ENCODE measurements at regions of chr5 and their contacts with region 1.

Region 1: GRCh38 chr5:38265546-38266179 is 7.3 kb downstream of the EGFLAM start:
- DNase-seq: no peak
- ATAC-seq: peak; percentile 55 to 61
- H3K4me3 ChIP-seq: no peak overlapping the region
- H3K27ac ChIP-seq: peak overlapping the region in 2 of 4 donors; percentile 11 to 23
- H3K4me1 ChIP-seq: no peaks in the 10 kb centered on the region
- H3K27me3 ChIP-seq: peaks cover 10 to 18% (median 11%) of the 10 kb centered on the region in 3 donors
- CTCF ChIP-seq: peak in 4 of 5 experiments; percentile 36 to 72 (median 62)
- POLR2A ChIP-seq: no peak

Region 2: DNA sequence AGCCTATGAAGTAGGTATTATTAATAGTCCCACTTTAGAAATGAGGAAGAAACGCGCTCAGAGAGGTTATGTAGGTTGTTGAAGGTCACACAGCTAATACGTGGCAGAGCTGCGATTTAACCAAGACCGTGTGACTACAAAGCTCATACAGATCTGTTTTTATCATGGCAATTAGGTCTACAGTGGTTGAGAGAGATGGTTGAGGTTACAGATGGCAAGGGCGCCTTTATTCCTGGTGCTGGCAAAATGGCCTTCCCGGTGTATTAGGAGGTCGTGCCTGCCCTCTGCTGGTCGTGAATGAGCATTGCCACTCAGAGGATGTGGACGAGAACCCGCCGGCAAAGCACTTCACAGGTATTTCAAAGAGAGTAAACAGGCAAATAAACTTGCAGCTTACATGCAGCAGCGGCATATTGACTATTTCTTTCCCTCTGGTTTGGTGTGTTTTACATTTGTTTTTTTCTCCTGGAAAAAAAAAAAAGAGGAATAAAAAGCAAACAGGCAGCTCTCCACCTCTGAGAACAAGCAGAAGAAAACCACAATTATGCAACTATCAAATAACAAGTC is 72.6 kb before region 1 on chr5:
- in situ Hi-C with region 1: no loop called
- intact Hi-C with region 1: no loop called
- DNase-seq: peak; percentile 44 to 63
- ATAC-seq: peak; percentile 78 to 85
- H3K4me3 ChIP-seq: no peak overlapping the region
- H3K27ac ChIP-seq: no peak overlapping the region
- H3K4me1 ChIP-seq: peaks cover 6% of the 10 kb centered on the region in 2 donors
- H3K27me3 ChIP-seq: peaks cover 0 to 11% (median 0%) of the 10 kb centered on the region in 3 donors
- CTCF ChIP-seq: peak; percentile 79 to 88 (median 84)
- POLR2A ChIP-seq: no peak

Region 3: DNA sequence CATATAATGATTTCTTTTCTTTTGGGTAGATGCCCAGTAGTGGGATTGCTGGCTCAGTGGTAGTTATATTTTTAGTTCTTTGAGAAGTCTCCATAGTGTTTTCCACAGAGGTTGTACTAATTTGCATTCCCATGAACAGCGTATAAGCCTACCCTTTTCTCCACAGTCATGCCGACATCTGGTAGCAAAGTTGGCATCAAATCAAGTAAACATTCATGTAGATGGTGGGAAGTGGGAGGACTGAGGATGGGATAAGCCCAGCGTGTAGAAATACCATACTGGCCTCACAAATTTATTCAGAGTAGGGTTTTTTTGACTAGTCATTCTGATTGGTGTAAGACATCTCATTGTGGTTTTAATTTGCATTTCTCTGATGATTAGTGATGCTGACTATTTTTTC is 108.1 kb after region 1 on chr5:
- in situ Hi-C with region 1: no loop called
- intact Hi-C with region 1: loop called (anchors 10 kb)
- DNase-seq: no peak
- ATAC-seq: no peak
- H3K4me3 ChIP-seq: no peak overlapping the region
- H3K27ac ChIP-seq: peak overlapping the region in 3 of 4 donors; percentile 5 to 23 (median 20)
- H3K4me1 ChIP-seq: no peaks in the 10 kb centered on the region
- H3K27me3 ChIP-seq: no peaks in the 10 kb centered on the region
- CTCF ChIP-seq: no peak
- POLR2A ChIP-seq: no peak

Region 4: DNA sequence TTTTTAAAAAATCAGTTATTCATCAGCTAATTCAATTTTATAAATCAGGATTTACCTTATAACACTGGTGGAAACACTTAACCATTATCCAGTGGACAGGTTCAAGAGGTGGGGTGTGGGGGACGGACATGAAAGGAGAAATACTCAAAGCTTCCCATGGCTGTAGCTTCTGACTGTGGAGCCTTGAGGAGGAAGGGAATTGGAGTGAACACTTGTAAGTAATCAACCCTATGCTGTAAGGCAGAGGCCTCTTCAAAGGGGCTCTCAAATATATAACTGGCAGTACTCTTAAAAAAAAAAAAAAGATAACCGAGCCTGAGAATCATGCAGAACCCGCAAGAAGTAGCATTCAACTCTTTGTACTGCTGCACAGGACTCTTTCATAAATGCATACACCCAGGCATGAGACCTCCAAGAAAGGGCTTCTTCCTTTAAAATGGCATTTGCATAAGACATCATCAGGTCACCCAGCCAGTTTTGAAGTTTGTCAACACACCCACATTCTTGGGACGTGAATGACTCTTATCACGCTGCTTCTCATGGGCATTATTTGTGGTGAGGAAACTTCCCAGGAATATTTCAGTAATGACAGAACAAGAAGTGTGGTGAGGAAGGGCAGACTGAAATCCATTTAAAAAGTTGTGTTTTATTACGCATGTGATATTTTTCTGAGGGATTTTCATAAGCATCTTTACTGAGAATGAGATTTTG is 588.2 kb after region 1 on chr5:
- in situ Hi-C with region 1: no loop called
- intact Hi-C with region 1: no loop called
- DNase-seq: no peak
- ATAC-seq: no peak
- H3K4me3 ChIP-seq: no peak overlapping the region
- H3K27ac ChIP-seq: no peak overlapping the region
- H3K4me1 ChIP-seq: no peaks in the 10 kb centered on the region
- H3K27me3 ChIP-seq: no peaks in the 10 kb centered on the region
- CTCF ChIP-seq: no peak
- POLR2A ChIP-seq: no peak

Measured in gastrocnemius medialis (tissue), 4 donors.